ENCODE measurements at regions of chr7 and their contacts with region 1.

Region 1: GRCh38 chr7:101898106-101898505 is 80.7 kb downstream of the CUX1 start:
- DNase-seq: no peak
- H3K4me3 ChIP-seq: no peak overlapping the region
- H3K27ac ChIP-seq: no peak overlapping the region
- H3K4me1 ChIP-seq: peaks cover 5% of the 10 kb centered on the region
- H3K27me3 ChIP-seq: no peaks in the 10 kb centered on the region
- CTCF ChIP-seq: no peak

Region 2: DNA sequence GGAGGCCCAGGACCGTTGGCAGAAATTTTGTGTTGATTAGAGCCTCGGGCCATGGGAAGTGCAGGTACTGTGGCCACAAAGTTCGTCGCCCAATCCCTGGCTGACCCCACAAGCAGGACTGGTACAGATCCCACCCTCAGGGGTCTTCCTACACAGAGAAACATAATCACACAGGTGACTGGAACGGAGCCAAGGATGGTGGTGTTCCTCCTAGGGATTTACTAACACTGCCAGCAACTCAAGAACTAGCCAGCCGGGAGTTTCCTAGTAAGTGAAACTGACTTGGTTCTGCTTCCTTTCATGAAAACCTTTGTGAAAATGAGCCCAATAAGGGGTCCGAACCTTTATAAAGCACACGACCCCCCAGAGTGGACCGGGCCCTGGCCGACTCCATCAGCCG is 75.0 kb before region 1 on chr7:
- CTCF ChIA-PET with region 1: no interaction called
- dilution Hi-C with region 1: loop called (anchors 5 kb)
- in situ Hi-C with region 1: no loop called
- intact Hi-C with region 1: no loop called
- DNase-seq: no peak
- H3K4me3 ChIP-seq: no peak overlapping the region
- H3K27ac ChIP-seq: no peak overlapping the region
- H3K4me1 ChIP-seq: no peaks in the 10 kb centered on the region
- H3K27me3 ChIP-seq: no peaks in the 10 kb centered on the region
- CTCF ChIP-seq: no peak

Region 3: DNA sequence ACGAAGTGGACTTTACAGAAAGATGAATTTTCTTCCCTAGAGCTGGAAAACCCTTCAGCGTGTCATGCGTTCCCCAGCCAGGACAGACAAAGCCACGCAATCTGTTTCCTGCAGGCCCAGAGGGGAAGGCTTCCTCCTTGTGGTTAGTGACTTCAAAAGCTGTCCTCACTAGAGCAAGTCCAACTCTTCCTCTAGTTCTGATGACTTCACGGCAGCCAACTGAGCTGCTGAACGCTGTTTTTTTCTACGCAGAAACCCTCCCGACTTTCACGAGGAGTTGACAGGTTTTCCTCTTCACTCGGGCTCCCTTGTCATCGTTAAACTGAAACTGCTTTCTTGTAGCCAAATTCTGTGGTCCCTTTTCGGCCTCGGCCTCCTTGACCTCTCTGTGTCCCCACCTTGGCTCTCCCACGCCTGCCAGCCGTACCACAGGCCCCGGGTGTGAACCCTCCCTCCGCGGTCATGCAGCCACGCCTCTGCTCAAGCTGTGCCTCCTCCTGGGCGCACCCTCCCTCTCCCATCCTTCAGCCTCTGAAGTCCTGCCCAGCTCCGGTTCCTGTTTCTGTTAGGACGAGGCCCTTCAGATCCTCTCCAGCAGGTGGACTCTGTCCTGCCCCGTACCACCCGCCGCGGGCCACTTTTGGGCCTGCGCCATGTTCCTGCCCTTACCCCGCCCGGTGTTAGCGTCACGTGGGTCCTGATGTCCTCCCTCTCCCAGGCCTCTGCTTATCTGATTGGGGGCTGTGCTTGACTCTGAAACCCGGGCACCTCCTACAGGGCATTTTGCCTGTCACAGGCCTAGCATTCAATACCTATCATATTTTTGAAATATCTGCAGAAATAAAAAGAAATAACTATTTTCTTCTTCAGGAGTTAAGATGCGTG is 41.4 kb before region 1 on chr7:
- CTCF ChIA-PET with region 1: no interaction called
- dilution Hi-C with region 1: loop called (anchors 5 kb)
- in situ Hi-C with region 1: no loop called
- intact Hi-C with region 1: no loop called
- DNase-seq: peak; percentile 92
- H3K4me3 ChIP-seq: peak overlapping the region; percentile 33 to 45 (median 40)
- H3K27ac ChIP-seq: peak overlapping the region; percentile 60
- H3K4me1 ChIP-seq: peaks cover 17% of the 10 kb centered on the region
- H3K27me3 ChIP-seq: no peaks in the 10 kb centered on the region
- CTCF ChIP-seq: peak; percentile 32 to 65

Region 4: DNA sequence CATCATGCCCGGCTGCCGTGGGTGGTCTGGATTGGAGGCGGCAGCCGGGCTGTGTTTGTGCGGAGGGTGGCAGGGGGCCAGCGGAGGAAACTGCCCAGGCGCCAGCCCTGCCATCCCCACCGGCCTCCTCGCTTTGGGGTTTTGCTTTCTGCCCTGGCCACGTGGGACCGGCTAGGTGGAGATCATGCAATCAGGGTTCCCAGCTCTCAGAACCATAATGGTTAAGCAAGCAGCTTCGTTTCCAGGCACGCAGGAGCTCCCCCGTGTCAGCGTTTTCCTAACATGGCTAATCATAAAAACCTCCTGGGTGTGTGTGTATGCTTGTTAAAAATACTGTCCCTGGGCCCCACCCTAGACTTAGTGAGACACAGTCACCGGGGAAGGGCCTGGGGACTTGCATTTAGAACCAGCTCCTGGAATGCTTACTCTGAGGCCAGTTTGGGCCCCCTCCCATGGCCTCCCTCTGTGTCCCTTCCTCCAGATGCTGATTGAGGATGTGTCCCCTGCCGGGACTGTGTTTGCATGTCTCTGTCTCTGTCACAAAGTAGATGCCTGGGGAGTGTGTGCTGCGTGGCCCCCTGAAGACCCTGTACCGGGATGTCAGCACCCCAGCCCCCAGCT is 38.6 kb after region 1 on chr7:
- CTCF ChIA-PET with region 1: no interaction called
- dilution Hi-C with region 1: loop called (anchors 5 kb)
- in situ Hi-C with region 1: no loop called
- intact Hi-C with region 1: no loop called
- DNase-seq: no peak
- H3K4me3 ChIP-seq: no peak overlapping the region
- H3K27ac ChIP-seq: no peak overlapping the region
- H3K4me1 ChIP-seq: peaks cover 10% of the 10 kb centered on the region
- H3K27me3 ChIP-seq: no peaks in the 10 kb centered on the region
- CTCF ChIP-seq: no peak

Region 5: DNA sequence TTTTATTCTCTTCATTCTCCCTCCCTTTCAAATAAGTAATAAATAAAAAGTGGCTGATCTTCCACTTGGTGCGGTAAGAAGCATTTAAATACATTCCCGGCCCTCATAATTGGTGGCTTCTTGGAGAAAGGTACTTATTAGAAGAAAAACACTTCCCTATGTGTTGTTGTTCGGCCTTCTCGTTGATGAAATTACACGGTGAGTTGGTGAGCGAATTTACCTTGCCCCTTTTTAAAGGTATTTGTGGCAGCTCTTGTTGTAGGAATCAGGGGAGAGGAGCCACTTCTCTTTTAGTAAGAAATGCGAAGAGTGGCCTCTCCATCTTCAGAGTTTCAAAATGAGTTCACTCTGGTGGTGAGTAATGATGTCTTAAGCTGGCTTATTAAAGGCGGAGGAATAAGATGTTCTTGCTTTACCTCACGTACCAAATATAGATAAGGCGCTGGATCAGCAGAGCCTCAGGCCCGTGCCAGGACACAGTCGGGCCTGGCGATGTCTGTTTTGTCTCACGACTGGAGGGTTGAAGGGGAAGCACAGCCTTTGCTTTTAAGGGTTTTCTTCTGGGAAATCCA is 55.2 kb after region 1 on chr7:
- CTCF ChIA-PET with region 1: no interaction called
- dilution Hi-C with region 1: no loop called
- in situ Hi-C with region 1: no loop called
- intact Hi-C with region 1: no loop called
- DNase-seq: no peak
- H3K4me3 ChIP-seq: no peak overlapping the region
- H3K27ac ChIP-seq: no peak overlapping the region
- H3K4me1 ChIP-seq: peaks cover 5% of the 10 kb centered on the region
- H3K27me3 ChIP-seq: no peaks in the 10 kb centered on the region
- CTCF ChIP-seq: no peak